BJ (cell line): ENCODE measurements at regions of chr16 and their contacts with region 1.

Region 1: DNA sequence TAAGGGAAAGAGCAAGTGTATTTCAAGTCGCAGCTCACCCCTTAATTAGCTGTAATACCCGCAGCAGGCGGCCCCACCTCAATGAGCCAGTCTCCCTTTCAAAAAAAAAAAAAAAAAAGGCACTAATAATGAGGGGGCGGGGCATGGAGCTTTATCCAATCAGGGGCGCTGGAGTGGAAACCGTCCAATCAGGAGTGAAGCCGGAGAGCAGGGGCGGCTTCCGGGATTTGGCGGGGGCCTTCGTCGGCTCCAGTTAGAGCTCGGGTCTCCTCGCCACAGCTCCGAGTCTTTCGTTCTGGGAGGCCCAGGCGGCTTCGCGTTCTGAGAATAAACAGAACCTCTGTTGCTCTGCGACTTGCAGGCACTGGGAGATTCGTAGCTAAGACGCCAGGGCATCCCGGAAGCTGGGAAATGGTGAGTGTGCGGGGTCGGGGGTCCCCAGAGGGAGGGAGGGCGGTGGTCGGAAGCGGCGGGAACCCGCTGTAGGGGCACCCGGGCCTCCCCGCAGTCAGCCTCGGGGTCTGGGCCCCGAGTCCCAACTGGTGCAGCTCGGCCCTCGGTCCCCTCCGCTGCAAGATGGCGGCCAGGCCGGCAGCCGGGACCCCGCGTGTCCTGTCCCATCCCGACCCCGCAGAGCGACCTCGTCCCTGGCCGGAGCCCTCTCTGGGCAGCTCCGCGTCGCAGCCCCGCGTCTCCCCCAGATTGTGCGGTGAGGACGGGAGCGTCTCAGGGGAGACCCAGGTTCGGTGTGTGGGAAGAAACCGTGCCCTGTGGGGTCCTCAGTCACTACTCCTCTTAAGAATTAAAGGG is at the start of gene ZNF267:
- DNase-seq: no peak
- H3K4me3 ChIP-seq: peak within 1 kb of the TSS; percentile 95
- H3K27me3 ChIP-seq: no peaks in the 10 kb centered on the region
- CTCF ChIP-seq: no peak
- polyA plus RNA-seq, gene ZNF267: 1.4 and 3.5 TPM in 2 replicates

Region 2: DNA sequence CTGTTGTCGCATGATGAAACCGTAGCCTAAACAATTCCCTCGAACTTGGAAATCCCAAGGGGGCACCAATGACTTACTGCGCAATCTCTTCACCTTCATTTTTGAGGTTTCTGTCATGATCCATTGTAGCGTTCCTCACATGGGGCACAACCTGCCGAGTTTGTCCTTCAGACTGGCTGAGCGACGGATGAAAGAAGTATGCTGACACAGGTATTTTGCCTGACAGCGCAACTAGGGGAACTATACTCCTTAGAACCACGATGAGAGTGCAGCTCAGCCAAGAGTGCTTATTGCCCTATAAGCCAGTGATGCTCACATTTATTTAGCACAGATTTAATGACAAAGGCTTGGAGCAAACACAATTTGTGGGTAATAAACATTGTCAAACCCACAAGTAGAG is 106.5 kb before region 1 on chr16:
- CTCF ChIA-PET with region 1: no interaction called
- POLR2A ChIA-PET with region 1: no interaction called
- DNase-seq: no peak
- H3K4me3 ChIP-seq: no peak overlapping the region
- H3K27me3 ChIP-seq: no peaks in the 10 kb centered on the region
- CTCF ChIP-seq: no peak

Region 3: GRCh38 chr16:31861455-31861854 is 12.3 kb before region 1 on chr16:
- CTCF ChIA-PET with region 1: interaction called, 34 read pairs
- POLR2A ChIA-PET with region 1: no interaction called
- DNase-seq: no peak
- H3K4me3 ChIP-seq: no peak overlapping the region
- H3K27me3 ChIP-seq: peaks cover 2% of the 10 kb centered on the region; the same call in 1 of the 2 replicates
- CTCF ChIP-seq: no peak